Activated B cell treated with CpG ODN at 0.5 μM for 24 hours (primary cell): ENCODE measurements at regions of chrX and their contacts with region 1.

Region 1: DNA sequence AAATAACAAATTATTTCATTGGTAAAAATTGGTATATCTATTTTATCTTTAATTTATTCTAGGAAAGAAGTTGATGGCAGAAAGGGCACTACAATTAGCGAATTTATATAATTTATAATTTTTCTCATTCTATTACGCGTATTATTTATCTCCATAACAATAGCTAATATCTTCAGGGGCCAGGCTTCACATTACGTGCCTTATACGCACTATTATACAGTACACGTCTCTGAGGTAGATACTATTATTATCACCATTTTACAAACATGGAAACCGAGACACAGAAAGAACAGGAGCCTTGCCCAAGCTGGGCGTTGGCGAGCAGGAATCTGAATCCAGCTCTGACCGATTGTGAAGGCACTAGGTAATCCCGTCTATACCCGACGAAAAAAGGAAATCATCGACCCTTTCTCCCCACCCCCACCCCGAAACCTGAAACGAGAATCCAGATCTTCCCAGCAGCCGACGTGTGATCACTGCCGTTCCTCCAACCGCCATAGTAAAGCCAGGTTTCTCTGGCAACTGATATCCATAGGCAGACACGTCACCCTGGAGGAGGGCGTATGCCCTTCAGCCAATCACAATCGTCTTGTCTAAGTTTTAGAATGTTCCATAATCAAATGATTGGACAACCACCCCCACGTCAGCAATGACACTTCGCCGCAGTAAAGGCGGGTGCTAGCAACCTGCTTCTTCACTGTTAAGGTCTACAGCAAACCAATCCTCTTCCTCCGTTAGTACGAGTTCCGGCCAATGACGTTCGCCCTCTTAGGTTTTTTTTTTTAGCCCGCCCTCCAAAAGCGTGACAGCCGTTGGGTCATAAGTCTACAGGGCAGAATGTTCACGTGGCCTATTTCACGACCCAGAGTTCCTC is at the start of gene MORF4L2:
- DNase-seq: peak; percentile 55
- ATAC-seq: peak; percentile 83
- H3K4me3 Mint-ChIP-seq: peak within 1 kb of the TSS; percentile 80
- H3K27ac Mint-ChIP-seq: peak within 1 kb of the TSS; percentile 63
- H3K4me1 Mint-ChIP-seq: peaks cover 4% of the 10 kb centered on the region
- H3K27me3 Mint-ChIP-seq: no peaks in the 10 kb centered on the region
- CTCF ChIP-seq: no peak
- total RNA-seq, gene MORF4L2: 89.2 and 111 TPM in 2 replicates

Region 2: DNA sequence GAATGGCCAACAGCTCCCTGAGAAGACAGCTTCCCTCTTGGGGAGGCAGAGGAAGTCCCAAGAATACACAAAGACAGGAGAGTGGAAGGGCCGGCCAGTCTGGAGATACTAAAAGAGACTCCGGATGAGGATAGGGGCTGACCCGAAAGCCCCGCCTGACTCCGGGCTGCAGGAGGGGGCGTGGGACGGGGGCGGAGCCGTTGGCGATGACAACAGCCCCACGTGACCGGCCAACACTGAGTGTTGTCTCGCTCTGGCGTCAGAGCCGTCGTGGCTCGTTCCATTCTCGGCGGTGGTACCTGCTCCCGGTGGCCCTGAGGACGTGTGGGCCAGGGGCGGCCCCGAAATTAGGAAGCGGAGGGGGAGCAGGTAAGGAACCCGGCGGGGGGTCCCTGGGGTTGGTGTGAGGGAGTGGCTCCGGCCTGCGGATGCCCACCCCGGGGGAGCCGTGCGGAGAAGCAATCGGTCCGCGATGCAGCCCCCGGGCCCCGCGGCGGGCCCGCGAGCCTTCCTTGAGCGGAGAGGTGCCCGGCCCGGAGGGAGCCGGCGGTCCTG is 471.5 kb before region 1 on chrX and contains the start of gene BEX4:
- CTCF ChIA-PET with region 1: no interaction called
- POLR2A ChIA-PET with region 1: no interaction called
- intact Hi-C with region 1: loop called (anchors 2 kb)
- DNase-seq: peak; percentile 73
- ATAC-seq: peak; percentile 94
- H3K4me3 Mint-ChIP-seq: peak within 1 kb of the TSS; percentile 87
- H3K27ac Mint-ChIP-seq: peak within 1 kb of the TSS; percentile 75
- H3K4me1 Mint-ChIP-seq: peaks cover 9% of the 10 kb centered on the region
- H3K27me3 Mint-ChIP-seq: peaks cover 6% of the 10 kb centered on the region
- CTCF ChIP-seq: no peak
- total RNA-seq, gene BEX4: 12.1 and 12.9 TPM in 2 replicates

Region 3: DNA sequence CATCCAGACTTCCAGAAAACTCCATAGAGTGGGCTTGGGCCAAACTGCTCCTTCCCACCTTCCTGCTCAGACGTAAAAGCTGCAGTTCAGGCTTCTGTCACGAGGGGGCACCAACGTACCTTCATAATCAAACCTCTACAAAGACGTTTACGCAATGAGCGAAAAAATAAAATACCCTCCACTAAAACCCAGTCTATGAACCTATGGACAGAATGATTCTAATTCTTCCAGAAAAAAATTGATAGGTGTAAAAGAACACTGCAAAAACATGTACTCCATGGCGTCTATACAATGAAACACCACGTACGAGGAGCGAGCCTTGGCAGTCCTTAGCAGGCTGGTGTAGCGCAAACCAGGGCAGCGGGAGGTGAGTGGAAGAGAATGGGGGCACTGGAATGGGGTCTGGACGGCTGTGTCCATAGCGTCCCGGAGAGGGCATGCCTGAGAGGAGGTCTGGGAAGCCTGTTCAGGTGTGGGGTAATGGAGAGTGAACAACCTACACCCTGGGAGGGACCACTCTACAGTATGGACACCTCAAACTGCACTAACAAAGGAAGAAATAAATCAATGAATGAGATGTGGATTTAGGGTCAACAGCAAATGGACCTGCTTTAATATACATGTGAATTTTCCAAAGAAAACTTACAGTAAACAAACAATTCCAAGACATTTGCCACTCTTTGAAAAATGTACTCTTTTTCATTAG is 152.8 kb before region 1 on chrX:
- CTCF ChIA-PET with region 1: interaction called, 5 read pairs
- POLR2A ChIA-PET with region 1: interaction called, 4 read pairs
- intact Hi-C with region 1: loop called (anchors 1 kb)
- DNase-seq: peak; percentile 45
- ATAC-seq: peak; percentile 40
- H3K4me3 Mint-ChIP-seq: peak overlapping the region; percentile 61
- H3K27ac Mint-ChIP-seq: no peak overlapping the region
- H3K4me1 Mint-ChIP-seq: peaks cover 5% of the 10 kb centered on the region
- H3K27me3 Mint-ChIP-seq: no peaks in the 10 kb centered on the region
- CTCF ChIP-seq: no peak

Region 4: GRCh38 chrX:103573208-103573607 is 113.2 kb before region 1 on chrX:
- CTCF ChIA-PET with region 1: no interaction called
- POLR2A ChIA-PET with region 1: no interaction called
- intact Hi-C with region 1: no loop called
- DNase-seq: no peak
- ATAC-seq: no peak
- H3K4me3 Mint-ChIP-seq: no peak overlapping the region
- H3K27ac Mint-ChIP-seq: no peak overlapping the region
- H3K4me1 Mint-ChIP-seq: no peaks in the 10 kb centered on the region
- H3K27me3 Mint-ChIP-seq: no peaks in the 10 kb centered on the region
- CTCF ChIP-seq: no peak

Region 5: GRCh38 chrX:103607364-103608305 is 78.8 kb before region 1 on chrX and contains the start of gene TCEAL3:
- CTCF ChIA-PET with region 1: interaction called, 3 read pairs
- POLR2A ChIA-PET with region 1: interaction called, 8 read pairs
- intact Hi-C with region 1: loop called (anchors 5 kb)
- DNase-seq: peak; percentile 51
- ATAC-seq: peak; percentile 83
- H3K4me3 Mint-ChIP-seq: peak within 1 kb of the TSS; percentile 85
- H3K27ac Mint-ChIP-seq: peak within 1 kb of the TSS; percentile 63
- H3K4me1 Mint-ChIP-seq: peaks cover 7% of the 10 kb centered on the region
- H3K27me3 Mint-ChIP-seq: no peaks in the 10 kb centered on the region
- CTCF ChIP-seq: no peak
- total RNA-seq, gene TCEAL3: 7.7 and 8.5 TPM in 2 replicates

Region 6: GRCh38 chrX:103711533-103712369 is 25.3 kb after region 1 on chrX:
- CTCF ChIA-PET with region 1: no interaction called
- POLR2A ChIA-PET with region 1: no interaction called
- intact Hi-C with region 1: no loop called
- DNase-seq: no peak
- ATAC-seq: peak; percentile 31
- H3K4me3 Mint-ChIP-seq: no peak overlapping the region
- H3K27ac Mint-ChIP-seq: no peak overlapping the region
- H3K4me1 Mint-ChIP-seq: no peaks in the 10 kb centered on the region
- H3K27me3 Mint-ChIP-seq: no peaks in the 10 kb centered on the region
- CTCF ChIP-seq: no peak

Region 7: DNA sequence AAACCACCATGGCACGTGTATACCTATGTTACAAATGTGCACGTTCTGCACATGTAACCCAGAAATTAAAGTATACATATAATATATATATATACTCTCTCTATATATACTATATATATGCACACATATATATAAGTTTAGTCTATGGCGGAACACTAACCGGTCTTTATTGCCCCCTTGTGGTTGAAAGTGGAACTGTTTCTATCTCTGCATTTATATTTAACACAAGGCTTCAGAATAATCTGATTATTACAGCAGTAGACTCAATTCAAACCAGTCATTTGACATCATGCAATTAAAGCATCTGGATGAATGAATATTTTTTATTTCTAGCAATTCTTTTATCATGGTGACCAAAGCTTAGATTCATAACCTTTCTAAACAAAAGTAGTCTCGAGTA is 131.1 kb after region 1 on chrX:
- CTCF ChIA-PET with region 1: no interaction called
- POLR2A ChIA-PET with region 1: no interaction called
- intact Hi-C with region 1: loop called (anchors 1 kb)
- DNase-seq: no peak
- ATAC-seq: peak; percentile 37
- H3K4me3 Mint-ChIP-seq: no peak overlapping the region
- H3K27ac Mint-ChIP-seq: no peak overlapping the region
- H3K4me1 Mint-ChIP-seq: peaks cover 2% of the 10 kb centered on the region
- H3K27me3 Mint-ChIP-seq: no peaks in the 10 kb centered on the region
- CTCF ChIP-seq: no peak

Region 8: DNA sequence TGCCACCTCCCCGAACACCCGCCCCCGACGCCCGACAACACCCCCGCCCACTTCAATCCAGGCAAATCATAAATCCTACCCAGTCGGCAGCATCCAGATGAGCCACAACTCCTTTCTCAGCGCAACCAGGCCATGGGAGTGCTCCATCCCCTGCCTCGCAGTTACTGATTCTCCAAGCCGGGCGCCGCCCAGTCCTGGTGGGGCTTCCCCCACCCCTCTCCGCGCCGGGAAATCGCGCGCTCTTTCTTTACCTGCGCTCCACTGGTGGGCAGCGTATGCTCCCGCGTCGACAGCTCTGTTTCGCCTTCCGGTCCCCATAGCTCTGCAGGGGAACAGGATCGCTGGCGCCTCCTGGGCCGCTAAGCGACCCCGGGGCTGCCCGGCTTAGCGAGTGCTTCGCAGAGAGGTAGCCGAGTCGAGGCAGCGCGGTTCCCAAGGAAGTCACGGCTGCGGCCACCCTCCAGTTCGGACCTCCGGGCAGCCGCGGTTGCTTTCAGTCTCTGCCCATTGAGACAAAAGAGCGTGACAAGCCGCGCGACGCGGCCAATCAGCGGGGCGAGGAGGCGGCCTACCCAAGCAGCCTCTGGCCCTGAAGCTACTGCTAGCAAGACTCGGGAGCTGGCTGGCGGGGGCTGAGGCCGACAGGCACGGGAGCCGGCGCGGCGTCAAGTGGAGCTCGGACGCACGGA is 232.3 kb after region 1 on chrX:
- CTCF ChIA-PET with region 1: interaction called, 3 read pairs
- POLR2A ChIA-PET with region 1: no interaction called
- intact Hi-C with region 1: loop called (anchors 1 kb)
- DNase-seq: peak; percentile 45
- ATAC-seq: peak; percentile 70
- H3K4me3 Mint-ChIP-seq: peak overlapping the region; percentile 87
- H3K27ac Mint-ChIP-seq: peak overlapping the region; percentile 84
- H3K4me1 Mint-ChIP-seq: peaks cover 11% of the 10 kb centered on the region
- H3K27me3 Mint-ChIP-seq: no peaks in the 10 kb centered on the region
- CTCF ChIP-seq: no peak

Region 9: GRCh38 chrX:104156630-104157529 is 470.4 kb after region 1 on chrX and contains the start of gene SLC25A53:
- CTCF ChIA-PET with region 1: no interaction called
- POLR2A ChIA-PET with region 1: interaction called, 4 read pairs
- intact Hi-C with region 1: loop called (anchors 1 kb)
- DNase-seq: peak; percentile 67
- ATAC-seq: peak; percentile 89
- H3K4me3 Mint-ChIP-seq: peak within 1 kb of the TSS; percentile 100
- H3K27ac Mint-ChIP-seq: peak within 1 kb of the TSS; percentile 100
- H3K4me1 Mint-ChIP-seq: peaks cover 12% of the 10 kb centered on the region
- H3K27me3 Mint-ChIP-seq: no peaks in the 10 kb centered on the region
- CTCF ChIP-seq: no peak
- total RNA-seq, gene SLC25A53: 9.6 and 11.6 TPM in 2 replicates